Left colon (tissue), 2 donors: ENCODE measurements at regions of chr18 and their contacts with region 1.

Region 1: DNA sequence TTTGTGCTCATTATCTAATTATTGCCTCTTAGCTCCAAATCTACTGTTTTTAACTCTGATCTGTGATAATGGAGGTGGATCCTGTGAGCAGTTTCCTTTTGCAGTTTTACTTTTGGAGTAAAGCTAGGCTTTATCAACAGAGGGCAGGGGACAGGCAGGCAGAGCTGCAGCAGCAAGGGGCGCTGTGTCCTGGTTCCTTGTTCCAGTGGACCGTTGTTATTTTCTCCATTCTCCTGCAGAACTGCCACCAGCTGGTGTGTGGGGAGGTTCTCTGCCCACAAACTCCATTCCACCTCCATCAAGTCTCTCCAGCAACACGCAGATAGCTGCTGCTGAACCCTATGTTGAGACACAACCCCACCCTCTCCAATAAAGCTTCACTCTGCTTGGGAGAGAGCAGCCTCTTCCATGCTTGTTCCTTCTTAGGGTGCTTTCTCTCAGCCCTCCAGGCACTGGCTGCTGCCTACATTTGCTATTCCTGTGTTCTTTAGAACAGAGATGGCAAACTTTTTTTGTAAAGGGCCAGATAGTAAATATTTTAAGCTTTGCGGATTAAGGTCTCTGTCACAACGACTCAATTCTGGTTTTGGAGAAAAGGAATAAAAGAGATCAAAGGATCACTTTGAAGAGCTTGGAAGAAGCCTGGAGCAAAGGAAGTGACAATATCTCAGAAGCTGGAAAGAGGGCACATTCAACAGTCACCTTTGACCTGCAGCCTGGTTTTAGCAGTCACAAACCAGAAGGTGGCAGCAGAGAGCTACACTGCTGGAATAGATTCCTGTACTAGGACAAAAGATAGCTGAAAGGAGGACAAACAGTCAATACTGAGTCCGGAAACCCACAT is 208.8 kb downstream of the CCDC178 start:
- DNase-seq: peak; percentile 38 to 63
- ATAC-seq: peak; percentile 82

Region 2: GRCh38 chr18:33495278-33495677 is 263.6 kb after region 1 on chr18:
- intact Hi-C with region 1: loop called (anchors 10 kb)
- DNase-seq: no peak
- ATAC-seq: peak; percentile 71

Region 3: DNA sequence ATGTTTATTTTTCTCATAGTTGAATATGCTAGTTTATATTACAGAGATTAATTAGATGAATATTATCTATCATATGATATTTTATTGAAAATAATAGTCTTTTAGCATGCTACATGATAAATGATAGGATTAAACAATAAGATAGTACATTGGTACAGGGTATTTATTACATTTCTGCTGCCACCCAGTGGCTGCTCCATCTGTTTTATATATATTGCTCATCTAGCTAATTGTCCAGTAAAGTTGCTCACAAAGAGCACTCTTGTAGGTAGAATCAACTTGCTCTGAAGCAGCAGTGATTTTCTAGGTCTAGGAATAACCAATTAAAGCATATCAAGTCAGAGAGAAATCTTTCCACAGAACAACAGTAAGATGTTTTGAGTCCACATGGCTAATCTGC is 529.7 kb after region 1 on chr18:
- intact Hi-C with region 1: loop called in 1 of 2 experiments (anchors 10 kb)
- DNase-seq: peak in 1 of 2 donors; percentile 54
- ATAC-seq: peak; percentile 69

Region 4: DNA sequence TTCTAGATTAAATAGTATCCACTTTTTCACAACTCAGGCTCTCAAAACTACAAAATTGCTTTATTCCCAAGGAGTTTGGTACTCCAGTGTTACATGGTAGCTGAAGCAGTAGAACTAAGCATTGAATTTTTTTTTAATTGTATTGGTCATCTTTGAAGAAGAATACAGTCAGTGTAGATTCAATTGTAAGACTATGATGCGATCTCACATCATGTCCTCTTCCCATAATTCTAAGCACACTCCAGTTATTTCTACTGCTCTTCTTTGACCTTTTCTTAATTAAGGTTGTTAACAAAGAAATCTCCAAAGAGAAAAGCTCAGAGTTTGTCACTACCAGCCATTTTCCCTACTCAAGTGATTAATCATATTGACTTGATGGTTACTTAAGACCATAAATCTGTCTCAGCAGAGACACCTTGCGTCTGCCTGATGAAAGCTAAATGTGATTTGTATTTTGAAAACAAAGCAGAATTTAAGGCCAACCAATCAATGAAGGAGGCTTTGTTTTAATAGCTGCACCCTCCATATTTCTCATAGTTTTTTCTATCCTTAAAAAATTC is 1608.6 kb after region 1 on chr18:
- intact Hi-C with region 1: no loop called
- DNase-seq: no peak
- ATAC-seq: no peak